Psoas muscle (tissue), 8 donors: ENCODE measurements at regions of chr9 and their contacts with region 1.

Region 1: DNA sequence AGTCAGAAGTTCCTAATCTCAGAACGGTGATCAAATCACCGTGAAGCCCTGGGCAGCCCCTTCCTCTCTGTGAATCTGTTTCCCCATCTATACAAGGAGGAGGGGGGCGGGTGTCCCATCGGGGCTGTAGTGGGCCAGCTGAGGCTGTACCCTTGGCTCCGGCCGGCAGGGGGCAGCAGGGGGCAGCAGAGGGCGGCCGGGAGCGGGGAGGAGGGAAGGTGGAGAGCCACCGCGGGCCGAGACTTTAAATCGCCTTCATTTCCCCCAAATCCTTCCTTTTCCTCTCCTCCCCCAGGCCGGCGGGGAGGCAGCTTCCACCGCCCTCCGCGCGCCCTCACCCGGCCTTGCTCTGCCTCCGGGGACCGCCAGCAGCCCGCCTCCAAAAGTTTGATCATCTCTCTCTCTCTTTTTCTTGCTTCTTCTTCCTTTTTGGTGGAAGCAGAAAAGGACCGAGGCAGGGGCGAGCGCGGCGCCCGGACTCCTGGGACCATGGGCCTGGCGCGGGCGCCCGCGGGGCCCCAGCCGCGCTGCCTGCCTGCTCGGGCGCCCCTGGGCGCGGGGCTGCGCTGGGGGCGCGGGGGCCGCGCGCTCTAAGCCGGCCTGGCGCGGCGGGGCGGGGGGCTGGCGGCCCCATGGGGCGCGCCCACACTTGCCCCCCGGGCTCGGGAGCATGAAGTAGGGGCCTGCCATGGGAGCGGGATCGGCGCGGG is at the start of gene COL27A1:
- DNase-seq: peak; percentile 86 to 89
- ATAC-seq: peak; percentile 85 to 94 (median 90)
- H3K4me3 ChIP-seq: peak within 1 kb of the TSS; percentile 78
- H3K27ac ChIP-seq: peak within 1 kb of the TSS; percentile 75
- H3K4me1 ChIP-seq: peaks cover 12% of the 10 kb centered on the region
- H3K27me3 ChIP-seq: peaks cover 0 to 16% (median 5%) of the 10 kb centered on the region in 3 donors
- CTCF ChIP-seq: peak; percentile 89
- total RNA-seq, gene COL27A1: 3.9 to 8.5 (median 4.7) TPM

Region 2: DNA sequence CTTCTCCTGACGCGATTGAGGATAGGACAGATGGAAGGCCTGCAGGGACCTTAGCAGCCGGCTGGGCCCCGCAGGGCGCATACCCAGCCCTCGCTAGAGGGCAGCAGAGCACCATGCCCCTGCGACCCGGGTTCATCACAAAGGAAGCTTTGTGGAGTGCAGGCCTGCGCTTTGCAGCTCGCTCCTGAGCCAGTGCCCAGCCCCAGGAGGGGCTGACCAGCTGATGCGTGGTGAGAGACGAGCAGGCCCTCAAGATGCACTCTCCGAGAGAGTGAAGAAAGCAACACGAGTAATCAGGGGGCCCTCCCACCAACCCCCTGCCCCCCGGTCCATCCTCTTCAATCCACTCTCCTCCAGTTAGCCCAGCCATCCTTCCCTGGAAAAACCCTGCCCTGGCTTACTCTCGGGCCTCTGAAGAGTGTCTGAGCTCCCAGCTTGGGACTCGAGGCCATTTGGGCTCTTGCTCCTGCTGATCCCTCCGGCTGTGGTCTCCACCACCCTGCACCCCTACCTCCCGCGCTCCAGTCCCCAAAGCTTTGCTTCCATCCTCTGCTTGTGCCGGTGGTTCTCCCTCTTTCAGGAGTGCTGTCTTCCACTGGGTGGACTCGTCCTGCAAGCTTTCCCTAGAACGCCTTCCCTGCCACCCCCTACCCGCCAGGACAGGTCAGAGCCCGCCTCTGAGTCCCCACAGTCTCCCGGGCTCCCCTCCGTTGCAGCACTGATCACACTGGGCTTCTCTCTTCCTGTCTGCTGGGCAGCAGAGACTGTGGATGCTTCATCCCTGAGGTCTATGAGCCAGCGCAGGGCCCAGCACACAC is 47.2 kb before region 1 on chr9:
- intact Hi-C with region 1: loop called (anchors 2 to 5 kb)
- DNase-seq: peak; percentile 71 to 87
- ATAC-seq: peak; percentile 98 to 99 (median 98)
- H3K4me3 ChIP-seq: no peak overlapping the region
- H3K27ac ChIP-seq: no peak overlapping the region
- H3K4me1 ChIP-seq: no peaks in the 10 kb centered on the region
- H3K27me3 ChIP-seq: no peaks in the 10 kb centered on the region
- CTCF ChIP-seq: peak; percentile 97

Region 3: GRCh38 chr9:114207034-114207810 is 51.8 kb after region 1 on chr9:
- intact Hi-C with region 1: loop called in 1 of 2 experiments (anchors 5 kb)
- DNase-seq: peak; percentile 81 to 93
- ATAC-seq: peak; percentile 87 to 91 (median 88)
- H3K4me3 ChIP-seq: no peak overlapping the region
- H3K27ac ChIP-seq: peak overlapping the region; percentile 88
- H3K4me1 ChIP-seq: peaks cover 52% of the 10 kb centered on the region
- H3K27me3 ChIP-seq: no peaks in the 10 kb centered on the region
- CTCF ChIP-seq: no peak

Region 4: GRCh38 chr9:114271641-114272081 is 116.2 kb after region 1 on chr9:
- intact Hi-C with region 1: loop called (anchors 2 to 5 kb)
- DNase-seq: peak; percentile 42 to 82
- ATAC-seq: peak; percentile 66 to 94 (median 82)
- H3K4me3 ChIP-seq: no peak overlapping the region
- H3K27ac ChIP-seq: no peak overlapping the region
- H3K4me1 ChIP-seq: peaks cover 12% of the 10 kb centered on the region
- H3K27me3 ChIP-seq: no peaks in the 10 kb centered on the region
- CTCF ChIP-seq: peak; percentile 30

Region 5: DNA sequence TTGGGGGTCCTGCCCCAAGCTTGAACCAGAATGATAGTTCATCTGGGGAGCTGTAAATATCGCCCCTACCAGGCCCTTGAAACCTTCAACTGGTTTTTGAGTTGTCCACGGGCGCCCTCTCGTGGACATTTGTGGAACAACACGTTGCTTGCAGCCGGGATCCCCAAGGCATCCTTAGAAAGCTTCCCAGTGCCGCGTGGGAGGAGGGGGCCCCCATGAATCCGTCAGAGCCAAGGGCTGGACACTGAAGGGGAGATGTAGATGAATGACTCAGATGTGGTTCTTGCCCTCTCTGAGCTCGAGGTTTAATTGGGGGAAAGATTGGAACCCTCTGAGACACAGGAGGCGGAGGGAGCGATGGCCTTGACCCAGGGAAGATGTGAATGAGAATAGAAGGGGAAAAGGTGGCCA is 135.7 kb after region 1 on chr9:
- intact Hi-C with region 1: loop called in 1 of 2 experiments (anchors 1 kb)
- DNase-seq: peak; percentile 71 to 84
- ATAC-seq: peak; percentile 67 to 89 (median 79)
- H3K4me3 ChIP-seq: no peak overlapping the region
- H3K27ac ChIP-seq: no peak overlapping the region
- H3K4me1 ChIP-seq: no peaks in the 10 kb centered on the region
- H3K27me3 ChIP-seq: no peaks in the 10 kb centered on the region
- CTCF ChIP-seq: peak; percentile 95